AG04450 (cell line): ENCODE measurements at regions of chr12 and their contacts with region 1.

Region 1: GRCh38 chr12:89019408-89020120 is 332.7 kb downstream of the DUSP6 start:
- DNase-seq: peak; percentile 69
- H3K4me3 ChIP-seq: peak overlapping the region; percentile 46
- H3K27ac ChIP-seq: no peak overlapping the region
- H3K27me3 ChIP-seq: no peaks in the 10 kb centered on the region
- CTCF ChIP-seq: peak; percentile 98

Region 2: GRCh38 chr12:88884600-88884999 is 135.0 kb before region 1 on chr12:
- CTCF ChIA-PET with region 1: no interaction called
- POLR2A ChIA-PET with region 1: no interaction called
- DNase-seq: no peak
- H3K4me3 ChIP-seq: no peak overlapping the region
- H3K27ac ChIP-seq: no peak overlapping the region
- H3K27me3 ChIP-seq: no peaks in the 10 kb centered on the region
- CTCF ChIP-seq: no peak

Region 3: GRCh38 chr12:89029961-89030360 is 10.4 kb after region 1 on chr12:
- CTCF ChIA-PET with region 1: interaction called, 10 read pairs
- POLR2A ChIA-PET with region 1: no interaction called
- DNase-seq: no peak
- H3K4me3 ChIP-seq: no peak overlapping the region
- H3K27ac ChIP-seq: no peak overlapping the region
- H3K27me3 ChIP-seq: no peaks in the 10 kb centered on the region
- CTCF ChIP-seq: no peak

Region 4: GRCh38 chr12:89051065-89051677 is 31.6 kb after region 1 on chr12:
- CTCF ChIA-PET with region 1: interaction called, 16 read pairs
- POLR2A ChIA-PET with region 1: no interaction called
- DNase-seq: peak; percentile 34
- H3K4me3 ChIP-seq: no peak overlapping the region
- H3K27ac ChIP-seq: no peak overlapping the region
- H3K27me3 ChIP-seq: no peaks in the 10 kb centered on the region
- CTCF ChIP-seq: peak; percentile 88

Region 5: GRCh38 chr12:89269174-89269573 is 249.6 kb after region 1 on chr12:
- CTCF ChIA-PET with region 1: no interaction called
- POLR2A ChIA-PET with region 1: no interaction called
- DNase-seq: no peak
- H3K4me3 ChIP-seq: no peak overlapping the region
- H3K27ac ChIP-seq: no peak overlapping the region
- H3K27me3 ChIP-seq: no peaks in the 10 kb centered on the region
- CTCF ChIP-seq: no peak

Region 6: GRCh38 chr12:89352492-89353187 is 333.1 kb after region 1 on chr12 and contains the start of gene DUSP6:
- CTCF ChIA-PET with region 1: interaction called, 36 read pairs
- POLR2A ChIA-PET with region 1: interaction called, 5 read pairs
- DNase-seq: peak; percentile 96
- H3K4me3 ChIP-seq: peak within 1 kb of the TSS; percentile 98
- H3K27ac ChIP-seq: peak within 1 kb of the TSS; percentile 99
- H3K27me3 ChIP-seq: no peaks in the 10 kb centered on the region
- CTCF ChIP-seq: no peak
- polyA plus RNA-seq, gene DUSP6: 27.9 and 32.0 TPM in 2 replicates

Region 7: DNA sequence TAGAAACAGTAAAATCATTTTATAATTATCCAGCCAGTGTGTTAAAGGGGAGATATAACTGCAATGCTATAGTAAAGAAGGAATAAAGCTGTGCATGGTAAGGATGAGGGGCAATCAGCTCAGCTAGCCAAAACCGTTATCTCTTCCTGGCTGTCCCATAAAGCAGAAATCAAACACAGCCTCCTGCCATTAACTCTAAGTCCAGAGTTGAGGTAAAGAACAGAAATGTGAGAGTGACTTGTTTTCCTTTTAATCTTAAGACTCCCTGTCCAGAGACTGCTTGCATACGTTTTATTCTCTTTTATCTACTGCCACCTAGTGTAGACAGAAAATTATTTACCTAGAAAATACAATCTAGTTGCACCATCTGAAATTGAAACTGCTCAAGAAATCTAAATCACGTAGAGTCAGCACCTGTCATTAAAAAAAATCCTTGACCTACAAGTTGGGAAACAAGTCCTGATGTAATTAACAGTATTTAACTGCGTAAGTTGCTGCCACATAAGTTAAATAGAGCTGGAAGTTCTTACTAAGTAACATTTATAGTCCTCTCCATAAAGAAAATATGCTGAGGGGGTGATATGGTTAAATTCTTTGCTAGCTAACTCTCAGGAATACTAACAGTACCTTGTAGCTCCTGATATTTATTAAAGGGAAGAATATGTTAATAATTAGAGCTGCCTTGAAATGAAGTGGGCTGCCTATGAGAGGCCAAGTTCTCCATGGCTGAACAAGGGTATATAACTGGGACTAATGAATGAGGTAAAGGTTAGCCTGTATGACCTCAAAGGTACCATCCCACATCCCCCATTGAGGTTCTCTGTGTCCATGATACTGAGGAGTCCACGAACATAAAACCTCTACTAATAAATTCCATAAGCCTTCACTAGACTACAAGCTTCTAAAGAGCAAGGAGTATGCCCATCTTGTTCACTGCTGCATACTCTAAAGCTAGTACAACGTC is 442.4 kb after region 1 on chr12:
- CTCF ChIA-PET with region 1: interaction called, 224 read pairs
- POLR2A ChIA-PET with region 1: interaction called, 3 read pairs
- DNase-seq: peak; percentile 58
- H3K4me3 ChIP-seq: no peak overlapping the region; the same call in 1 of the 2 replicates
- H3K27ac ChIP-seq: no peak overlapping the region
- H3K27me3 ChIP-seq: no peaks in the 10 kb centered on the region
- CTCF ChIP-seq: peak; percentile 49

Region 8: DNA sequence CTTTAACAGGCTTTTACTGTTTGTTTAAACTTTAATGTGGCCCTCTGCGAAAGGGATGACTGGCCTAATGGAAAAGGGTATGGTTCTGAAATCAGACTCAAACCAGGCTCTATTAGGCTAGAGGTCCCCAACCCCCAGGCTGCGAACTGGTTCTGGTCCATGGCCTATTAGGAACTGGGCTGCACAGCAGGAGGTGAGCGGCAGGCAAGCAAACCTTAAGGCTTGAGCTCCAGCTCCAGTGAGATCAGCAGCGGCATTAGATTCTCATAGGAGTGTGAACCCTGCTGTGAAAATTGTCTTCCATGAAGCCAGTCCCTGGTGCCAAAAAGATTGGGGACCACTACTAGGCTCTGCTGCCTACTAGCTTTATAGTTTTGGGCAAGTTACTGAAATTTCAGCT is 494.0 kb after region 1 on chr12:
- CTCF ChIA-PET with region 1: interaction called, 11 read pairs
- POLR2A ChIA-PET with region 1: no interaction called
- DNase-seq: no peak
- H3K4me3 ChIP-seq: no peak overlapping the region
- H3K27ac ChIP-seq: no peak overlapping the region
- H3K27me3 ChIP-seq: no peaks in the 10 kb centered on the region
- CTCF ChIP-seq: no peak

Region 9: DNA sequence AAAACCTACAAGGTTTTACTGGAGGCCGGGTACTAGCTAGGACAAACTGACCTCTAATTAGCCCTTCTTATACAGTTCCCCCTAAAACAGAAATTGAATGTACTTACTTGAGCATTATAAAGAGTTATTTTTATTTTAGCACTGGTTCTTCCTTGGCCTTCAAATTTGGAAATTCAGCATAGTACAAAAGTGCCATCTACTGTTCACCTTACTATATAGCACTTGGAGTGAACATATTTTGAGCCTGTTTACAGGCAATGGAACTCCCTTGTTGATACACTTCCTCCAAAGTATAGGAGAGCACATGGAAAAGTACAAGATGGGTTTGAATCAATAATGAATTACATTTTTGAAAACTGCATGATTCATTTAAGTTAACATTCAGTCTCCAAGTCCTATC is 510.2 kb after region 1 on chr12:
- CTCF ChIA-PET with region 1: interaction called, 78 read pairs
- POLR2A ChIA-PET with region 1: no interaction called
- DNase-seq: no peak
- H3K4me3 ChIP-seq: no peak overlapping the region
- H3K27ac ChIP-seq: no peak overlapping the region
- H3K27me3 ChIP-seq: no peaks in the 10 kb centered on the region
- CTCF ChIP-seq: peak; percentile 76